ENCODE measurements at regions of chr9 and their contacts with region 1.

Region 1: GRCh38 chr9:4604678-4605095 is 57.4 kb upstream of the PLPP6 start:
- DNase-seq: peak; percentile 83
- CTCF ChIP-seq: peak; percentile 60

Region 2: DNA sequence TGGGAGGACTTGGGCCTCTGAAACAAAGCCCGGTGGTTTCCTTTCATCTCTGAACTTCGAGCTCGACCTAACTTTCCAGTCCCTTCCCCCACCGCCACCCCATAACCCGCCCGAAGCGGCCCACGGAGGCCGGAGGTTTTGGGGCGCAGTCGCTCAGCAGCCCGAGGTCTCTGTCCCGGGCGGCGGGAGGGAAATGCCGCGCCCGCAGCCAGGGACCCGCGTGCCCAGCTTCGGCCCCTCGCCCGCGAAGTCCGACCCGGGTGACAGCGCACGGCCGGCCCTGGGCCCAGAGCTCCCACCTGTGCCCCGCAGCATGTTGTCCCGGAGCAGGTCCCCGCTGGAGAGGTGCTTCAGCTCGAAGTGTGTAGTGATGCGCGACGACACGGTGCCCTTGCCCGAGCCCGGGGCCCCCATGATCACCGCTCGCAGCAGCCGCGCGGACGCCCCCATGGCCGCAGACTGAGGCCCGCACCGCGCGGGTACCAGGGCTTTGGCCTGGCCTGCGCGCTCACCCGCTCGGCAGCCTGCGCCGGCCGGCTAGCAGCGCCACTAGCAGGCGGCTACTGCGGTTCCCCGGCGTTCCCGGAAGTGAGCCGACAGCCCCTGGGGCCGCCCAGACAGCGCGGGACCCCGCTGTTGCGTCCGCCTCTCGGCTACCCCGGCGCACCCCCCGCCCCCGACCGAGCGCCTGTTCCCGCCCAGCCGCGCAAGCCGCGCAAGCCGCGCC is 136.1 kb after region 1 on chr9 and contains the start of gene AK3:
- in situ Hi-C with region 1: loop called (anchors 10 kb)
- DNase-seq: peak; percentile 99
- CTCF ChIP-seq: peak; percentile 69

Measured in GM13977 (cell line).